ENCODE measurements at regions of chr6 and their contacts with region 1.

Region 1: GRCh38 chr6:148144917-148145521 is 197.6 kb upstream of the SASH1 start:
- DNase-seq: peak; percentile 76
- ATAC-seq: peak; percentile 49 to 50

Region 2: DNA sequence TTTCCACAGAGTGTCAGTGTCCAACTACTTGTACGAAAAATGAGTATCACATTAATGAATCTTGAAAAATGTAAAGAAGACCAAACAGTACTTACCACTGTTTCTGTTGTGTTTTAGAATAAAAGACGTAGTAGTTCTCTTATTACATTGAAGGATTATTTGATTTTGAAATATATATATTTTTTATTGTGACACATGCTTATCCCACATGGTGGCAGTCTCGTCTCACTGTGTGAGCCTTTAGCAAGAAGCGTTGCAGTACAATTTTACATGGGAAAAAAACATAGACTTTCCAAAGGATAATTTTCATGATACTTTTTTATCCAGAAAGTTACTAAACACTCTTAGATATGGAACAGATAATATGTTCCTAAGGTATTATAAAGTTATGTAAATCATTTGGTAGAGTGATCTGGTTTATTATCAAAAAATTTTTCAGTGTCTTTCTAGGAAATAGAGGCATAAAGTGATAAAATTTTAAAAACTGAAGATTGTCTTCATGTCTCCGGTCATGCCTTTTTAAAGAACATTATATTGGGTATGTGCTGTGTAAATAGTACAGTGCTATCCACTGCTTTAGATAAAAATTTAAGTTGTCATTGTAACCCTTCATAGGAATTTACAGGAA is 754.0 kb before region 1 on chr6:
- intact Hi-C with region 1: loop called in 1 of 2 experiments (anchors 10 kb)
- DNase-seq: no peak
- ATAC-seq: no peak

Region 3: GRCh38 chr6:148203970-148204369 is 59.0 kb after region 1 on chr6:
- intact Hi-C with region 1: no loop called
- DNase-seq: no peak
- ATAC-seq: peak; percentile 16 to 56

Measured in left cardiac atrium (tissue), 4 donors.